ENCODE measurements at regions of chr11 and their contacts with region 1.

Region 1: GRCh38 chr11:46865340-46865739 is 19.3 kb upstream of the CKAP5 start:
- DNase-seq: no peak
- H3K4me3 ChIP-seq: no peak overlapping the region
- H3K4me1 ChIP-seq: no peaks in the 10 kb centered on the region
- H3K27me3 ChIP-seq: no peaks in the 10 kb centered on the region

Region 2: GRCh38 chr11:46972343-46972742 is 107.0 kb after region 1 on chr11:
- in situ Hi-C with region 1: loop called (anchors 25 kb)
- DNase-seq: no peak
- H3K4me3 ChIP-seq: no peak overlapping the region
- H3K4me1 ChIP-seq: peaks cover 18% of the 10 kb centered on the region
- H3K27me3 ChIP-seq: no peaks in the 10 kb centered on the region